ENCODE measurements at regions of chr19 and their contacts with region 1.

Region 1: GRCh38 chr19:46265217-46265828 is 31.5 kb upstream of the HIF3A start:
- DNase-seq: peak in 1 of 3 donors; percentile 63
- ATAC-seq: peak; percentile 94 to 99 (median 96)
- H3K4me3 ChIP-seq: no peak overlapping the region
- H3K27ac ChIP-seq: no peak overlapping the region
- H3K4me1 ChIP-seq: no peaks in the 10 kb centered on the region
- H3K27me3 ChIP-seq: no peaks in the 10 kb centered on the region
- CTCF ChIP-seq: peak; percentile 80 to 95 (median 89)
- POLR2A ChIP-seq: no peak

Region 2: GRCh38 chr19:46021531-46022041 is 243.7 kb before region 1 on chr19:
- intact Hi-C with region 1: loop called in 1 of 2 experiments (anchors 5 kb)
- DNase-seq: peak in 1 of 3 donors; percentile 52
- ATAC-seq: no peak
- H3K4me3 ChIP-seq: no peak overlapping the region
- H3K27ac ChIP-seq: no peak overlapping the region
- H3K4me1 ChIP-seq: no peaks in the 10 kb centered on the region
- H3K27me3 ChIP-seq: peaks cover 0 to 6% of the 10 kb centered on the region in 2 donors
- CTCF ChIP-seq: no peak
- POLR2A ChIP-seq: no peak

Region 3: DNA sequence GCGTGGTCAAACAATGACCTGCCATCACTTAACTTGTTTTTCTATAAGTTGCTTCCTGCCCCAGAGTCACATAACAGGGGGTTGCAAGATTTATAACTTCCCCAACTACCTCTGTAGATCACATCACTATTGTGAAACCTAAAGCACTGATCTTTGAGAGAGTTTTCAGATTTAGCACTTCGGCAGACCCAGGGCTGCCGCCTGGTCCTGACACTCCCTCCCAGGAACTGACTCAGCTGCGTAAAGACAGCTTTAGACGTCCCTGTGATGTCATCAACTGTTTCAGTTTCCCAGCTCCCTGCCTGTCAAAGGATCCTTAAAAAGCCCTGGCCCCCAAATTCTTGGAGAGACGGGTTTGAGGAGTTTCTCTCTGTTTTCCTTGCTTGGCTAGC is 83.9 kb before region 1 on chr19:
- intact Hi-C with region 1: loop called in 1 of 2 experiments (anchors 10 kb)
- DNase-seq: no peak
- ATAC-seq: no peak
- H3K4me3 ChIP-seq: no peak overlapping the region
- H3K27ac ChIP-seq: no peak overlapping the region
- H3K4me1 ChIP-seq: no peaks in the 10 kb centered on the region
- H3K27me3 ChIP-seq: no peaks in the 10 kb centered on the region
- CTCF ChIP-seq: no peak
- POLR2A ChIP-seq: no peak